ENCODE measurements at regions of chr10 and their contacts with region 1.

Region 1: GRCh38 chr10:10734356-10735064 is 283.2 kb upstream of the CELF2 start:
- DNase-seq: no peak
- ATAC-seq: peak; percentile 57 to 72

Region 2: DNA sequence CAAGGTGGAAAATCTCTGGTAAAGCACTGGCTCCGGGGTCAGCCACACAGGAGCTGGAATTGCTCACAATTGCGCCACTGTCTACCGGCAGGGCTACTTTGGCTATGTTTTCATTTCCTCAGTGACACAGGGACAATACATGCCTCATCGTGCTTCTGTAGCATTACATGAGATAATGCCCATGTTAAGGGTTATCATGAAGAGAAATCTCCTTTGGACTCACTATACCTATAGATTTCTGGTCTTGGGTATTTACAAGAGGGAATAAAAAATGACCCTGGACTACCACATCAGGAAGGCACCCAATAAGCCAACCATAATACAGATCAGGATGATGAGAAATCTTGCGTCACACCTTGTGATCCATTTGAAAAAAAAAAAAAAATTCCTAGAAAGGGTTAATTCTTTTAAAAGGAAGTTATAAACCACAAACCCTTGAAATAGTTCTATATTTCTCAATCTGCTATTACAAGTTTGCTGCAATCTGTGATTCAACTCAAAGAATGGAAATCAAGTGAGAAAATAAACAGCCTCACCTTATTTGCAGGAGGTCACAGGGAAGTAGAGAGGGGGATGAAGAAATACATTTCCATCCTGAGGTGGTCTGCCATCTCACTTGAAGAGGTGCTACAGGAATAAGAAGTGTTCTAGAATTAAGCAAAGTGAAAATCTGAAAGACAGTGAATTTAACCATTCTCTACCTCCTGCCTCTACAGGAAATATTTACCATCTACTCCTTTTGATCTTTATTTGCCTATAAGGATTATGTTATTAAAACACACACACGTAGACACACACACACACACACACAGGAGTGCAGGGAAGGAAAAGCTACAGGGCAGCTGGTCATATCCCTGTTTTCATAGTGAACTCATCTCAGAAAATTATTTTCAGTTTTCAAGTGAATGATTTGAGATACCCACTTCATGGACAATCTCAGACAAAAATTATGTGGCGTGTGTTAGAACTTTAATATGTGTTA is 51.9 kb after region 1 on chr10:
- intact Hi-C with region 1: loop called in 1 of 2 experiments (anchors 10 kb)
- DNase-seq: no peak
- ATAC-seq: peak in 1 of 2 donors; percentile 21

Region 3: GRCh38 chr10:10946801-10947200 is 212.3 kb after region 1 on chr10:
- intact Hi-C with region 1: no loop called
- DNase-seq: no peak
- ATAC-seq: no peak

Measured in left cardiac atrium (tissue), 4 donors.